CD4-positive, alpha-beta memory T cell (primary cell): ENCODE measurements at regions of chr12 and their contacts with region 1.

Region 1: GRCh38 chr12:49776413-49776812 is 35.1 kb downstream of the TMBIM6 start:
- DNase-seq: peak in 4 of 5 donors; percentile 32 to 42 (median 38)
- H3K4me3 ChIP-seq: no peak overlapping the region
- H3K4me3 Mint-ChIP-seq: peak overlapping the region in 2 of 8 donors; percentile 38 to 64
- H3K27ac ChIP-seq: no peak overlapping the region
- H3K27ac Mint-ChIP-seq: peak overlapping the region in 1 of 7 donors; percentile 25
- H3K4me1 ChIP-seq: peaks cover 15% of the 10 kb centered on the region
- H3K4me1 Mint-ChIP-seq: peaks cover 8 to 19% (median 9%) of the 10 kb centered on the region in 4 donors
- H3K27me3 ChIP-seq: no peaks in the 10 kb centered on the region
- H3K27me3 Mint-ChIP-seq: peaks cover 10 to 19% of the 10 kb centered on the region in 2 donors

Region 2: DNA sequence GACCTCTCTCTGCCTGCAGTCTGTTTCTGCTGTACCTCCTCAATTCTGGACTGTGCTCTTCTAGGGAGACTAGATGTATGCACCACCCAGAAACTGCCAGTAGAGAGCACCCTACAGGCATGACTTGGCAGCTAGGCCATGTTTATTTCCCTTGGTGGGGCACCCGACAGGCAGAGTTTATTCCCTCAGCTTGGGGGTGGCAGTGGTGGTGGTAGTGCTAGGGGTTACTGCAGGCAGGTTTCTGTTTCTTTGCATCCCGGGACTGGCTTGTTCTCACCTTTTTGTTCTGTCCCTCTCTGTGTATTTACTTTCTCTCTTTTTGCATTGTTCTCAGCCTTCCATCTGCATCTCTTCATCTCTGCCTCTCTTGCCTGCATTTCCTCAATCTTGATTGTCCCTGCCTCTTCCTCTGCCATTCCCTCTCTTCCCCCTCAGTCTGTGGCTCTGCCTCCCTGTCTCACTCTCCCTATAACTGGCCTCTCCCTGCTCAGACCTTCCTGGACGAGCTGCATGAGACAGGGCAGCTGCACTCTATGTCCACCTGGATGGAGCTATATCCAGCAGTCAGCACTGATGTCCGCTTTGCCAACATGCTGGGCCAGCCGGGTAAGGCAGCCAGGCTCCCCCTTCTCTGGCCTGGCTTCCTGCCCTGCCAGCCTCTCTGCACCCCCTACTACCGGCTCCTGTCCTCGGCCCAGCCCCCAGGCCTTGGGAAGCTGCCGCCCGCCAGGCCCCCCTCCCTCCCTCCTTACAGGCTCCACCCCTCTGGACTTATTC is 139.2 kb before region 1 on chr12:
- CTCF ChIA-PET with region 1: interaction called, 21 read pairs
- POLR2A ChIA-PET with region 1: no interaction called
- intact Hi-C with region 1: no loop called
- DNase-seq: peak; percentile 53 to 71 (median 59)
- H3K4me3 ChIP-seq: no peak overlapping the region
- H3K4me3 Mint-ChIP-seq: no peak overlapping the region
- H3K27ac ChIP-seq: no peak overlapping the region
- H3K27ac Mint-ChIP-seq: peak overlapping the region in 5 of 7 donors; percentile 2 to 81 (median 30)
- H3K4me1 ChIP-seq: peaks cover 8% of the 10 kb centered on the region
- H3K4me1 Mint-ChIP-seq: peaks cover 9 to 13% (median 11%) of the 10 kb centered on the region in 4 donors
- H3K27me3 ChIP-seq: no peaks in the 10 kb centered on the region
- H3K27me3 Mint-ChIP-seq: no peaks in the 10 kb centered on the region

Region 3: DNA sequence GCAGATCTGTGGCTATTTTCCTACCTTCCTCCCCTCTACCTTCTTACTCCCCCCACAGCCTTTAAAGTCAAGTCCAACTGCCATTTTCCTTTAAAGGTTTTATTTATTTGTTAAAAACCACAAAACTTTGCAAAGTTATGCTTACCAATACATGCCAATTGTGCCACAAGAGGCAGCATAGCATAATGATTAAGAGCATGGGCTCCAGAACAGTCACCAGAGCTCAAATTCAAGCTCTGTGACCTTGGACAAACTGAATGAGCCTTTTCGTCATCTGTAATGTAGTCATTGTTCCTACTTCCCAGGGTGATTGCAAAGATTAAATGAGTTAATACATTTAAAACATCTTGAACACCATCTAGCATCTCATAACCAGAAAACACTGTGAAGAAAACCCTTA is 56.2 kb before region 1 on chr12:
- CTCF ChIA-PET with region 1: interaction called, 4 read pairs
- POLR2A ChIA-PET with region 1: no interaction called
- intact Hi-C with region 1: loop called (anchors 10 kb)
- DNase-seq: no peak
- H3K4me3 ChIP-seq: no peak overlapping the region
- H3K4me3 Mint-ChIP-seq: no peak overlapping the region
- H3K27ac ChIP-seq: no peak overlapping the region
- H3K27ac Mint-ChIP-seq: no peak overlapping the region
- H3K4me1 ChIP-seq: no peaks in the 10 kb centered on the region
- H3K4me1 Mint-ChIP-seq: peaks cover 0 to 2% (median 0%) of the 10 kb centered on the region in 4 donors
- H3K27me3 ChIP-seq: no peaks in the 10 kb centered on the region
- H3K27me3 Mint-ChIP-seq: peaks cover 8 to 12% of the 10 kb centered on the region in 2 donors

Region 4: DNA sequence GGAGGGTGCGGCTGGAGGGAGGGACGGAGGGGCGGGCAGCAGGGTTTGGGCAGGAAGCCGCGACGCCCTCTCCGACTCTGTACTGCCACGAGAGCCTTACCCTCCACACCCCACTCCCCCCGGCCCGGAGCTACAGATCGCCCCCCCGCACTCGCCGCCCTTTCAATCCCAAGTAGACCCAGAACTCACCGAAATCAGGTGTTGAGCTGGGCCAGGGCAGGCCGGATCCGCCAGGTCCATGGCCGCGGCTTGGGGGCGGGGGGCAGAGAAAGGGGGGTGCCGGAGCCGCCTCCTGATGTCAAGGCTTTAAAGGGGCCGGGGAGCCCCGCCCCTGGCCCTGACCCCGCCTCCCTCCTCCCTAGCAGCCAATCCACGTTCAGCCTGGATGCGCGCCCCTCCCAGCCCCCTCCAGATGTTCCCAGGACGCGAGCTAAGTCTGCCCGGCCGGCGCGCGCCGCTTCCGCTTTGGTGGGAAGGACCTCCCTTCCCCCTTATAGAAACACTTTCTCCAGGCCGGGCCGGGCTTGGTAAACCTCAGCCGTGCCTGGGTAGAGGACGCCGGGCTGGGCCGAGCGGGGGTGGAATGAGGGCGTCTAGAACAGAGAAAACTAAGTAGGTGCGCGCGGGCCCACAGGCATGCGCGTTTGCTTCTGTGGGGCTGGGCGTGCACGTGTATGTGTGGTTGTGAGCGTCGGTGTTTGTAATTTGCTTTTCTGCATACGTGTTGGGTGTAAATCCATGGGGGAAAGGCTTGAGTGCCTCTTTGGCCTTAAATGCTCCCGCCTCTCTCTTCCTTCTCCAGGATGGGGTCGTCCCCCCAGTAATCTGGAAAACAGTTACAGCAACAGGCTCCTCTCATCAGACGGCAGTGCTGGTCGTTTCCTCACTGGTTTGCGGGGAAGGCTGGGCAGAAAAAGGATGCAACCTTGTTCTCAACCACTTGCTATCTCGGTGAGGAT is 52.0 kb after region 1 on chr12 and contains the start of gene NCKAP5L:
- CTCF ChIA-PET with region 1: interaction called, 12 read pairs
- POLR2A ChIA-PET with region 1: no interaction called
- intact Hi-C with region 1: no loop called
- DNase-seq: peak; percentile 91 to 96 (median 93)
- H3K4me3 ChIP-seq: peak within 1 kb of the TSS; percentile 70 to 79
- H3K4me3 Mint-ChIP-seq: peak within 1 kb of the TSS; percentile 91 to 99 (median 97)
- H3K27ac ChIP-seq: peak within 1 kb of the TSS; percentile 41
- H3K27ac Mint-ChIP-seq: peak within 1 kb of the TSS; percentile 84 to 98 (median 97)
- H3K4me1 ChIP-seq: peaks cover 24% of the 10 kb centered on the region
- H3K4me1 Mint-ChIP-seq: peaks cover 17 to 34% (median 24%) of the 10 kb centered on the region in 4 donors
- H3K27me3 ChIP-seq: no peaks in the 10 kb centered on the region
- H3K27me3 Mint-ChIP-seq: no peaks in the 10 kb centered on the region
- total RNA-seq, gene NCKAP5L: 10.4 to 11.2 TPM

Region 5: GRCh38 chr12:49866859-49867579 is 90.6 kb after region 1 on chr12:
- CTCF ChIA-PET with region 1: interaction called, 10 read pairs
- POLR2A ChIA-PET with region 1: no interaction called
- intact Hi-C with region 1: no loop called
- DNase-seq: peak; percentile 65 to 73 (median 67)
- H3K4me3 ChIP-seq: no peak overlapping the region
- H3K4me3 Mint-ChIP-seq: no peak overlapping the region
- H3K27ac ChIP-seq: no peak overlapping the region
- H3K27ac Mint-ChIP-seq: no peak overlapping the region
- H3K4me1 ChIP-seq: no peaks in the 10 kb centered on the region
- H3K4me1 Mint-ChIP-seq: no peaks in the 10 kb centered on the region
- H3K27me3 ChIP-seq: no peaks in the 10 kb centered on the region
- H3K27me3 Mint-ChIP-seq: peaks cover 2 to 4% of the 10 kb centered on the region in 2 donors

Region 6: DNA sequence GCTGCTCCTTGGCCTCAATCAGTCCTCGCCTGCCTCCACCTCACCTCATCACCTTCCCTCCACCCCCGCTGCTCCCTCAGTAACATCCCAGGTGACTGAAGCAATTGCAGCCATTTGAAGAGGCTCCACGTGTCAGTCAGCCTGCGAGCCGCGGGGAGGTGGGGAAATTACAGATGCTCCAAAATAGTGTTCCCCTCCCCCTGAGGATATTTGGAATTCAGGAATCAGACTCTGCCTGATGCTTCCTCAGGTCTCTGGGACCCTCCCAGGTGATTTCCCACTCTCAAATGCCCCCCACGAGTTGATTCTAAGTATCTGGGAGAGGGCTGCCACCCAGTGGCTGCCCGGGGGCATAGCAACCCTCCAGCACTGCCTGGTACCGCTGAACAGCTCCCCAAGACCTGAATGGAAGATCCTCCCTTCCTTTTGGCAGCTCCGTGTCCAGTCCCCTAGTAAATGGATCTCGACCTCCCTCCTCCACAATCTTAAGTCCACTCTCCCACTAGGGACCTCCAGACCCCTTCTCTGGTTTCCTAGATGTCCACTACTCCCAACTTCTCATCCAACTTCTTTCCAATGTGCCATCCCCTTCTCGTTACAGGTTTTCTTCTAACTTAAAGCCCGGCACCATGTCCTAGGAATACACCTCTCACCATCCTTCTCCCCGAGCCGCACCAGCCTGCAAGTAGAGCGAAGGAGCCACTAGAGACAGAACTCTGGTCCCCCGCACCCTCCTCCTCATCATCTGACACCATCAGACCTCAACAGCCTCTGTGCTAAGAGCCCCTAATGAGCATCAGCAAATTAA is 279.6 kb after region 1 on chr12:
- CTCF ChIA-PET with region 1: no interaction called
- POLR2A ChIA-PET with region 1: no interaction called
- intact Hi-C with region 1: loop called (anchors 5 kb)
- DNase-seq: peak; percentile 51 to 60 (median 54)
- H3K4me3 ChIP-seq: peak overlapping the region in 1 of 2 donors; percentile 15
- H3K4me3 Mint-ChIP-seq: peak overlapping the region; percentile 43 to 94 (median 77)
- H3K27ac ChIP-seq: no peak overlapping the region
- H3K27ac Mint-ChIP-seq: no peak overlapping the region
- H3K4me1 ChIP-seq: peaks cover 24% of the 10 kb centered on the region
- H3K4me1 Mint-ChIP-seq: peaks cover 17 to 35% (median 24%) of the 10 kb centered on the region in 4 donors
- H3K27me3 ChIP-seq: peaks cover 22% of the 10 kb centered on the region
- H3K27me3 Mint-ChIP-seq: peaks cover 45 to 61% of the 10 kb centered on the region in 2 donors